CD4-positive, alpha-beta memory T cell (primary cell): ENCODE measurements at regions of chr1 and their contacts with region 1.

Region 1: DNA sequence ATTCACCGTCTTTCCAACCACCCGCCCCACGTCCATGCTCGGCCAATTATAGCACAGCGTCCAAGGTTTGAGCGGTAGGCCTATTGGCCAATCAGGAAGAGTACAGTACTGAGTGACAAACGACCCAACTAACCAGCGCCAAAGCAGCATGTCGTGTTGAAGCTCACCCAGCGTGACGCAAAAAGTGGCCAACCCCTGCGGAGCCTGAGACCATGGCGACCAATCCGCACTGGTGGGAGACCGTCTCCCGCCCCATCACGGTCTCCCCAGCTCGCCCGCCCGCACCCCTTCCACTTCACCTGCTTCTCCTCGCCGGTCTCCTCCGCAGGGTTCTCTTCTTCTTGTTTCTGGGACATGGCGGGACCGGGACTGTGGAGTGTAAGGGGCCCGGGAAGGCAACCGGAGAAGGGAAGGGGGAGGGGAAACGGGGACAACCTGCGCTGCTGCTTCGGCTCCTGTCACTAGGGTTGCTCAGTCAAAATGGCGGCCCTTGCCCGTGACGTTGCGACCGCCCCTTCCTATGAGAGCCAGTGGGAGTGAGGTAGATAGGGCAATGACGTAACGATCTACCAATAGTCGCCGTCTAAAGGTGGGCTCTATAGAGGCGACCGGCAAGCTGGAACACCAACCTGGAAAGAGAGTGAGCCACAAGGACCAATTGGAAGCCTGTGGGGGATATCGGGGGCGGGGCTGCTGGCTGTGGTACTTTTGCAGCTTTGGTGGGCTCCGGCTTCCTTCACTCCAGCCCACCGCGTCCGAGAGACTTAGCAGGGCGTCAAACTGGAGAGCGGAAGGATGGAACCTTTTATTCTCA is at the start of gene ENSA:
- DNase-seq: peak; percentile 98 to 99 (median 98)
- H3K4me3 ChIP-seq: peak within 1 kb of the TSS; percentile 78 to 80
- H3K4me3 Mint-ChIP-seq: no peak within 1 kb of the TSS
- H3K27ac ChIP-seq: peak within 1 kb of the TSS; percentile 98
- H3K27ac Mint-ChIP-seq: no peak within 1 kb of the TSS
- H3K4me1 ChIP-seq: peaks cover 29% of the 10 kb centered on the region
- H3K4me1 Mint-ChIP-seq: peaks cover 18 to 21% (median 21%) of the 10 kb centered on the region in 4 donors
- H3K27me3 ChIP-seq: no peaks in the 10 kb centered on the region
- H3K27me3 Mint-ChIP-seq: no peaks in the 10 kb centered on the region
- total RNA-seq, gene ENSA: 99.7 to 101 TPM

Region 2: GRCh38 chr1:150420560-150421265 is 208.6 kb before region 1 on chr1:
- CTCF ChIA-PET with region 1: no interaction called
- POLR2A ChIA-PET with region 1: no interaction called
- intact Hi-C with region 1: no loop called
- DNase-seq: no peak
- H3K4me3 ChIP-seq: no peak overlapping the region
- H3K4me3 Mint-ChIP-seq: no peak overlapping the region
- H3K27ac ChIP-seq: no peak overlapping the region
- H3K27ac Mint-ChIP-seq: peak overlapping the region in 1 of 7 donors; percentile 18
- H3K4me1 ChIP-seq: peaks cover 2% of the 10 kb centered on the region
- H3K4me1 Mint-ChIP-seq: peaks cover 9 to 26% (median 16%) of the 10 kb centered on the region in 4 donors
- H3K27me3 ChIP-seq: no peaks in the 10 kb centered on the region
- H3K27me3 Mint-ChIP-seq: no peaks in the 10 kb centered on the region

Region 3: DNA sequence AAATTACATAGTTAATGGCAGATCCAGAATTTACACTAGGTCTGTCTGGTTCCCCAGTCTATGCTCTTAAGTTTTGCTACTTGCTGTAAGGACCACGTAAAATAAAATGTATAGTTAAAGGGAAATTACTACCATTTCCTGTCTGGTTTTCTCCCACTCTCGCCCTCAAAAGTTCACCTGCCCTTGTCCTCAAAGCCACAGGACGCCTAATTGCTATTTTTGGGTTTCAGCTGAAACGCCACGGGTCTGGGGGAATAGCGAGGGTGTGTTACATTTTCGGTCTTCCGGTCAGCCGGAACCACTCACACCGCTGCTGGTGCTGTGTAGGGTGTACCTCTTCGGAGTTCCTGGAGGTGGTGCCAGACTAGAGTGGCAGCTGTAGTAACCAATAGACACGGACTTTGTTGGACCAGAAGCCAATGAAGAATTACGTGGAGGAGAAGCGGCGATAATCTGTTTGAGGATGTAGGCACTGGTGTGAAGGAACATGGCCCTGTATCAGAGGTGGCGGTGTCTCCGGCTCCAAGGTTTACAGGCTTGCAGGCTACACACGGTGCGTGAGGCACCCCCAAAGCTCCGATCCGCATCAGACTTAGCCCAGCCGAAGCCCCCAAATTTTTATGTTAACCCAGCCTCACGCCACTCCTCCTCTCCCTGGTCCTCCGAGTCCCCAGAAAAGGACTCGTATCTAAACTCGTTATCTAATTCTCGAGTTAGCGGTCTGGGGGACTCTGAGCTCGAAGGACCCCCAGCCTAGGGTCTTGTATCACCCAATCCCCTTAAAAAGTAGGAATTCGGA is 142.2 kb before region 1 on chr1 and contains the start of gene TARS2:
- CTCF ChIA-PET with region 1: no interaction called
- POLR2A ChIA-PET with region 1: interaction called, 16 read pairs
- intact Hi-C with region 1: loop called (anchors 5 kb)
- DNase-seq: peak; percentile 95 to 96 (median 96)
- H3K4me3 ChIP-seq: peak within 1 kb of the TSS; percentile 78 to 83
- H3K4me3 Mint-ChIP-seq: peak within 1 kb of the TSS; percentile 94 to 100 (median 98)
- H3K27ac ChIP-seq: peak within 1 kb of the TSS; percentile 77
- H3K27ac Mint-ChIP-seq: peak within 1 kb of the TSS; percentile 72 to 100 (median 99)
- H3K4me1 ChIP-seq: peaks cover 13% of the 10 kb centered on the region
- H3K4me1 Mint-ChIP-seq: peaks cover 9 to 26% (median 20%) of the 10 kb centered on the region in 4 donors
- H3K27me3 ChIP-seq: no peaks in the 10 kb centered on the region
- H3K27me3 Mint-ChIP-seq: no peaks in the 10 kb centered on the region
- total RNA-seq, gene TARS2: 32.3 to 35.4 TPM

Region 4: GRCh38 chr1:150578965-150579798 is 50.1 kb before region 1 on chr1 and contains the start of gene MCL1:
- CTCF ChIA-PET with region 1: interaction called, 6 read pairs
- POLR2A ChIA-PET with region 1: interaction called, 191 read pairs
- intact Hi-C with region 1: loop called (anchors 1 kb)
- DNase-seq: peak; percentile 86 to 94 (median 89)
- H3K4me3 ChIP-seq: peak within 1 kb of the TSS; percentile 96 to 100
- H3K4me3 Mint-ChIP-seq: peak within 1 kb of the TSS; percentile 98 to 100 (median 99)
- H3K27ac ChIP-seq: peak within 1 kb of the TSS; percentile 97
- H3K27ac Mint-ChIP-seq: peak within 1 kb of the TSS; percentile 94 to 99 (median 99)
- H3K4me1 ChIP-seq: peaks cover 33% of the 10 kb centered on the region
- H3K4me1 Mint-ChIP-seq: peaks cover 18 to 58% (median 28%) of the 10 kb centered on the region in 4 donors
- H3K27me3 ChIP-seq: no peaks in the 10 kb centered on the region
- H3K27me3 Mint-ChIP-seq: no peaks in the 10 kb centered on the region
- total RNA-seq, gene MCL1: 314 to 331 TPM

Region 5: DNA sequence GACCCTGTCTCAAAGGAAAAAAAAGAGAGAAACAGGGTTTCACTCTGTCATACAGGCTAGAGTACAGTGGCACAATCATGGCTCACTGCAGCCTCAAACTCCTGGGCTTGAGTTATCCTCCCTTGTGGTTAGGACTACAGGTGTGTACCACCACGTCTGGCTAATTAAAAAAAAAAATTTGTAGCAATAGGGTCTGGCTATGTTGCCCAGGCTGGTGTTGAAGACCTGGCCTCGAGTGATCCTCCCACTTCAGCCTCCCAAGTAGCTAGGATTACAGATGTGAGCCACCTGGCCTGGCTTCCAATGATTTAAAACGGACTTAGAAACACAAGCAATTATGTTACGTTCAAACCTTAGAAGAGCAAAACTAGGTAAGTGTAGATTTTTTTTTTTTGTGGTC is 45.6 kb after region 1 on chr1:
- CTCF ChIA-PET with region 1: no interaction called
- POLR2A ChIA-PET with region 1: no interaction called
- intact Hi-C with region 1: no loop called
- DNase-seq: no peak
- H3K4me3 ChIP-seq: no peak overlapping the region
- H3K4me3 Mint-ChIP-seq: no peak overlapping the region
- H3K27ac ChIP-seq: no peak overlapping the region
- H3K27ac Mint-ChIP-seq: peak overlapping the region in 1 of 7 donors; percentile 80
- H3K4me1 ChIP-seq: no peaks in the 10 kb centered on the region
- H3K4me1 Mint-ChIP-seq: peaks cover 4 to 9% (median 6%) of the 10 kb centered on the region in 4 donors
- H3K27me3 ChIP-seq: no peaks in the 10 kb centered on the region
- H3K27me3 Mint-ChIP-seq: no peaks in the 10 kb centered on the region

Region 6: DNA sequence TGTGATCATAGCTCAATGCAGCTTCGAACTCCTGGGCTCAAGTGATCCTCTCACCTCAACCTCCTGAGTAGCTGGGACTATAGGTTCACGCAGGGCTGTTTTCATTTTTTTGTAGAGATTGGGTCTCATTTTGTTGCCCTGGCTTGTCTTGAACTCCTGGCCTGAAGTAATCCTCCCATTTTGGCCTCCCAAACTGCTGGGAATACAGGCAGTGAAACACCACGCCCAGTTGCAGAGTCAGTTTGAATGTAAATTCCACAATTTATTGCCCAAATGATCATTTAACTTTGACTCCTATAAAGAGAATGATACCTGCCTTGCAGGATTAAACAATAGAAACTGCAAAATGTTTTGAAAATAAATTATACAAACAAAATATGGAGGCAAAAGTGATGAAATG is 57.0 kb after region 1 on chr1:
- CTCF ChIA-PET with region 1: no interaction called
- POLR2A ChIA-PET with region 1: no interaction called
- intact Hi-C with region 1: no loop called
- DNase-seq: no peak
- H3K4me3 ChIP-seq: no peak overlapping the region
- H3K4me3 Mint-ChIP-seq: no peak overlapping the region
- H3K27ac ChIP-seq: no peak overlapping the region
- H3K27ac Mint-ChIP-seq: peak overlapping the region in 1 of 7 donors; percentile 48
- H3K4me1 ChIP-seq: peaks cover 9% of the 10 kb centered on the region
- H3K4me1 Mint-ChIP-seq: peaks cover 17 to 23% (median 22%) of the 10 kb centered on the region in 4 donors
- H3K27me3 ChIP-seq: no peaks in the 10 kb centered on the region
- H3K27me3 Mint-ChIP-seq: no peaks in the 10 kb centered on the region

Region 7: GRCh38 chr1:150696590-150697524 is 67.5 kb after region 1 on chr1 and contains the start of gene GOLPH3L:
- CTCF ChIA-PET with region 1: no interaction called
- POLR2A ChIA-PET with region 1: interaction called, 26 read pairs
- intact Hi-C with region 1: loop called (anchors 1 kb)
- DNase-seq: peak; percentile 90 to 97 (median 93)
- H3K4me3 ChIP-seq: peak within 1 kb of the TSS; percentile 86 to 92
- H3K4me3 Mint-ChIP-seq: peak within 1 kb of the TSS; percentile 94 to 100 (median 98)
- H3K27ac ChIP-seq: peak within 1 kb of the TSS; percentile 70
- H3K27ac Mint-ChIP-seq: peak within 1 kb of the TSS; percentile 88 to 100 (median 96)
- H3K4me1 ChIP-seq: peaks cover 27% of the 10 kb centered on the region
- H3K4me1 Mint-ChIP-seq: peaks cover 17 to 40% (median 27%) of the 10 kb centered on the region in 4 donors
- H3K27me3 ChIP-seq: no peaks in the 10 kb centered on the region
- H3K27me3 Mint-ChIP-seq: peaks cover 1 to 3% of the 10 kb centered on the region in 2 donors
- total RNA-seq, gene GOLPH3L: 29.7 to 30.4 TPM